MCF 10A (cell line): ENCODE measurements at regions of chr5 and their contacts with region 1.

Region 1: GRCh38 chr5:145887976-145888574 is 15.3 kb upstream of the GRXCR2 start:
- DNase-seq: peak; percentile 77
- H3K4me3 Mint-ChIP-seq: no peak overlapping the region
- H3K27ac Mint-ChIP-seq: no peak overlapping the region
- H3K4me1 Mint-ChIP-seq: peaks cover 5% of the 10 kb centered on the region
- H3K27me3 Mint-ChIP-seq: no peaks in the 10 kb centered on the region
- CTCF ChIP-seq: peak; percentile 79

Region 2: GRCh38 chr5:145697251-145697990 is 190.7 kb before region 1 on chr5:
- CTCF ChIA-PET with region 1: interaction called, 8 read pairs
- POLR2A ChIA-PET with region 1: no interaction called
- intact Hi-C with region 1: loop called (anchors 1 kb)
- DNase-seq: peak; percentile 75
- H3K4me3 Mint-ChIP-seq: no peak overlapping the region
- H3K27ac Mint-ChIP-seq: no peak overlapping the region
- H3K4me1 Mint-ChIP-seq: no peaks in the 10 kb centered on the region
- H3K27me3 Mint-ChIP-seq: no peaks in the 10 kb centered on the region
- CTCF ChIP-seq: peak; percentile 68

Region 3: GRCh38 chr5:145847499-145848497 is 40.3 kb before region 1 on chr5:
- CTCF ChIA-PET with region 1: interaction called, 43 read pairs
- POLR2A ChIA-PET with region 1: no interaction called
- intact Hi-C with region 1: no loop called
- DNase-seq: peak; percentile 68
- H3K4me3 Mint-ChIP-seq: no peak overlapping the region
- H3K27ac Mint-ChIP-seq: peak overlapping the region; percentile 18
- H3K4me1 Mint-ChIP-seq: peaks cover 21% of the 10 kb centered on the region
- H3K27me3 Mint-ChIP-seq: no peaks in the 10 kb centered on the region
- CTCF ChIP-seq: no peak

Region 4: GRCh38 chr5:145867806-145868205 is 20.3 kb before region 1 on chr5:
- CTCF ChIA-PET with region 1: interaction called, 30 read pairs
- POLR2A ChIA-PET with region 1: interaction called, 3 read pairs
- intact Hi-C with region 1: no loop called
- DNase-seq: peak; percentile 42
- H3K4me3 Mint-ChIP-seq: no peak overlapping the region
- H3K27ac Mint-ChIP-seq: no peak overlapping the region
- H3K4me1 Mint-ChIP-seq: no peaks in the 10 kb centered on the region
- H3K27me3 Mint-ChIP-seq: no peaks in the 10 kb centered on the region
- CTCF ChIP-seq: no peak

Region 5: GRCh38 chr5:145903113-145903512 is 15.0 kb after region 1 on chr5:
- CTCF ChIA-PET with region 1: interaction called, 22 read pairs
- POLR2A ChIA-PET with region 1: no interaction called
- intact Hi-C with region 1: no loop called
- DNase-seq: no peak
- H3K4me3 Mint-ChIP-seq: no peak overlapping the region
- H3K27ac Mint-ChIP-seq: no peak overlapping the region
- H3K4me1 Mint-ChIP-seq: peaks cover 1% of the 10 kb centered on the region
- H3K27me3 Mint-ChIP-seq: no peaks in the 10 kb centered on the region
- CTCF ChIP-seq: peak; percentile 15

Region 6: GRCh38 chr5:145981589-145982491 is 93.8 kb after region 1 on chr5:
- CTCF ChIA-PET with region 1: interaction called, 13 read pairs
- POLR2A ChIA-PET with region 1: no interaction called
- intact Hi-C with region 1: no loop called
- DNase-seq: no peak
- H3K4me3 Mint-ChIP-seq: no peak overlapping the region
- H3K27ac Mint-ChIP-seq: peak overlapping the region; percentile 26
- H3K4me1 Mint-ChIP-seq: peaks cover 10% of the 10 kb centered on the region
- H3K27me3 Mint-ChIP-seq: no peaks in the 10 kb centered on the region
- CTCF ChIP-seq: no peak

Region 7: GRCh38 chr5:146622391-146622790 is 734.3 kb after region 1 on chr5:
- CTCF ChIA-PET with region 1: no interaction called
- POLR2A ChIA-PET with region 1: no interaction called
- intact Hi-C with region 1: no loop called
- DNase-seq: no peak
- H3K4me3 Mint-ChIP-seq: no peak overlapping the region
- H3K27ac Mint-ChIP-seq: no peak overlapping the region
- H3K4me1 Mint-ChIP-seq: no peaks in the 10 kb centered on the region
- H3K27me3 Mint-ChIP-seq: peaks cover 22% of the 10 kb centered on the region
- CTCF ChIP-seq: peak; percentile 44